ENCODE measurements at regions of chr14 and their contacts with region 1.

Region 1: GRCh38 chr14:66496188-66496807 is 10.1 kb downstream of the CCDC196 start:
- DNase-seq: no peak
- H3K4me3 ChIP-seq: no peak overlapping the region
- CTCF ChIP-seq: no peak

Region 2: DNA sequence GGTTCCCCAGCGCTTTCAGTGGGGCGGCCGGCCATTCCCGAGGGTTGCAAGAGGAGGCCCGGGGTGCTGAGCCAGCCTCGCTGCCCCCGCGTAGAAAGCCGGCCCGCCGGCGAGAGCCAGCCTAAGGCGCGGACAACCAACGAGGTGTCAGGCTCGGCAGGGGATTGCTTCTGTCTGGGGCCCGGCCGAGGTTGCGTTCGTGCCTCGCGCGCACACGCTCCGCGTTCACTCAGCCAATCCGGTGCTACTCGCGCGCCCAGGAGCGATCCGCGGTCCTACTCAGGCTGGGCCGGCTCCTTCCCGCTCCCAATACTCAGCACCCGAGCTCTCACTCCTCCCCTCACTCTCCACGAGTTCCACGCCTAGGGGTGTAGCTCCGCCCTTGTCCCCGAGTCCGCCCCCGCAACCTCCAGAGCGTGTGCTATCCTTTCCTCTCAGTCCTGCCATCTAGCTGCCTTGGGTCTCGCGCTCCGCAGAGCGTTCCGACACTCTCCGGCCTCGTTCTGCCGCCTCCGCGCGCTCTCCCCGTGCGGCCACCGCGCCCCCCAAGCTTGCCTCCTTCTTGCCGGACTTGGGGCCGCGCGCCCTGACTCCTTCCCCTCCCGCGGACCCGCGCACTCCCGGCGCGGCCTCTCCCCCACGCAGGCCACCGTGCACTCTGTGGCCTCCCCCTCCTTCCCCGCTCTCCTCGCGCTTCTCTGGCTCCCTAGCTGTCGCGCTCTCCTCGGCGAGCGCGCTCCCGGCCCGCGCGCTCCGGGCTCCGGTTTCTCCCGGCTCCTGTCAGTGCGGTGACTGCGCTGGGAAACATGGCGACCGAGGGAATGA is 11.6 kb after region 1 on chr14 and contains the start of gene GPHN:
- CTCF ChIA-PET with region 1: interaction called, 32 read pairs
- POLR2A ChIA-PET with region 1: no interaction called
- DNase-seq: peak; percentile 89
- H3K4me3 ChIP-seq: peak within 1 kb of the TSS; percentile 91
- CTCF ChIP-seq: peak; percentile 40

Region 3: DNA sequence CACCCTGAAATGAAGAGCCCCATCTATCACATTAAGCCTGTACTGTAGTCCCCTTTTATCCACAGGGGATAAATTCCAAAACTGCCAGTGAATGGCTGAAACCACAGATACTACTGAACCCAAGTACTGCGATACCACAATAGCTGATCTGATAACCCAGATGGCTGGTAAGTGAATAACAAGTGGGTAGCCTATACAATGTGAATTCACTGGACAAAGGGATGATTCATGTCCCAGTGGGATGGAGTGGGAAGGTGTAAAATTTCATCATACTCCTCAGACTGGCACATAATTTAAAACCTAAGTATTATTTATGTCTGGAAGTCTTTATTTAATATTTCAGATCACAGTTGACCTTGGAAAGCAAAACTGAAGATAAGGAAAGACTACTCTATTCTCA is 213.0 kb after region 1 on chr14:
- CTCF ChIA-PET with region 1: no interaction called
- POLR2A ChIA-PET with region 1: no interaction called
- DNase-seq: no peak
- H3K4me3 ChIP-seq: no peak overlapping the region
- CTCF ChIP-seq: no peak